ENCODE measurements at regions of chr18 and their contacts with region 1.

Region 1: GRCh38 chr18:9971313-9971920 is 57.6 kb downstream of the VAPA start:
- DNase-seq: peak; percentile 87
- H3K4me3 ChIP-seq: no peak overlapping the region
- H3K27ac ChIP-seq: no peak overlapping the region
- H3K4me1 ChIP-seq: peaks cover 9% of the 10 kb centered on the region
- H3K27me3 ChIP-seq: peaks cover 7 to 8% of the 10 kb centered on the region in 2 experiments
- CTCF ChIP-seq: peak; percentile 51 to 54
- POLR2A ChIP-seq: no peak

Region 2: DNA sequence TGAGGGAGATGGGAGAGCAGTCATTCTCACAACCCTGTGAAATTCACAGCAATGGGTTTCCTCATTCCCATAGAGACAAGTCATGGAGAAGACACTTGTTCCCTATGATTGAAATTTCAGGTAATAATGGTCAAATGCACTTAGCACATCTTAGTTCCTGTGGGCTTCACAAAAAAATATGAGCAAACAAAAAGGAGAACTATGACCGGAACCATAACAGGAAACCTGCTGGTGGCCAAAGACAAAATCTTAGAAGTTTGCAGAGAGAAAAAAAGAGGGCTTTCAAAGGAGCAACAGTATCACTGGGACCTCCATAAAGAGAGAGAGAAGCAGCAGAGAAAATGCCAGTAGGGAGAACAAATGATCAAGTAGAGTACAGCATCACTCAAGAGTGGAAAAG is 344.1 kb after region 1 on chr18:
- CTCF ChIA-PET with region 1: interaction called, 13 read pairs
- POLR2A ChIA-PET with region 1: no interaction called
- dilution Hi-C with region 1: no loop called
- intact Hi-C with region 1: loop called (anchors 1 kb)
- DNase-seq: no peak
- H3K4me3 ChIP-seq: no peak overlapping the region
- H3K27ac ChIP-seq: no peak overlapping the region
- H3K4me1 ChIP-seq: no peaks in the 10 kb centered on the region
- H3K27me3 ChIP-seq: peaks cover under 1 to 12% of the 10 kb centered on the region in 2 experiments
- CTCF ChIP-seq: no peak
- POLR2A ChIP-seq: no peak

Region 3: DNA sequence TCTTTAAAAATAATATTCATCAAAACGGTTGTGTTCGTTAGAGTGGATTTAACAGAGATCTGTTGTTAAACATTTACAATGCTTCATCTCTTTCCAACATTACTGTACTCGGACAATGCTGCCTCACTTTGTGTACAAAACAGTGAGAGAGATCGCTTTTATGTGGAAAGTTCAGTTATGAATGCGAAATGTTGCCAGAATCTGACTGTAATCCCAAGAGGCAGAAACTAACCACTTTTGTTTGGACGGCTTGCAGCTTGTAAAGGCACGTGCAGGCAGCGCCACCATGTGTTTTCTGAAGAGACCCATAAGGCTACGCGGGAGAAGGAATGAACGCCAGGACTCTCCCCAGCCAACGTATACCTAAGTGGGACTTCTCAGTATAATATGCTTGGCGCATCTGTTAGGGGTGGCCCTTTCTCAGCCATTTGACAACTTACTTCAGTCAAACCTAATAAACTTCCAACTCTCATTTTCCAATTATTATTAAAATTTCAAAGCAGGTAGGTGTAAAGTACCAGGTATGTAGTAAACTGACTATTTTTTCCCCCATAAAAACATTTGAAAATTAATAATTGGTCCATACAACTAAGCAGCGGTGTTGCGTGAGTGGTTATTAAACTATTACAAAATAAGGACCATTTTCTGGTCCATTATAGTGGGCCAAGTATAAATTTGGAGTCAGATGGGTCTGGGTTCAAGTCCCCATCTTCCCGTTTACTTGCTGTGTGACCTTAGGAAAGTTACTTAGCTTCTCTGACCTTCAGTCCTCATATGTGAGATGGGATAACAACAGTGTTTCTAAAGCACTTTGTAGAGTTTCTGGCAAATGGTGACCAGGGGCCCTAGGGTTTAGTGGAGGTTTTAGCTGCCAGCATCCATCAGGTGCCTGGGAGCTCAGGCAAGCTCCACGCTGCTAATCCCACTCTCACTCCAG is 548.9 kb after region 1 on chr18:
- CTCF ChIA-PET with region 1: interaction called, 186 read pairs
- POLR2A ChIA-PET with region 1: no interaction called
- dilution Hi-C with region 1: loop called (anchors 25 kb)
- intact Hi-C with region 1: loop called (anchors 1 kb)
- DNase-seq: peak; percentile 86
- H3K4me3 ChIP-seq: no peak overlapping the region
- H3K27ac ChIP-seq: no peak overlapping the region
- H3K4me1 ChIP-seq: no peaks in the 10 kb centered on the region
- H3K27me3 ChIP-seq: peaks cover 32 to 49% of the 10 kb centered on the region in 2 experiments
- CTCF ChIP-seq: peak; percentile 72 to 81
- POLR2A ChIP-seq: no peak

Region 4: GRCh38 chr18:10787293-10787901 is 816.0 kb after region 1 on chr18:
- CTCF ChIA-PET with region 1: no interaction called
- POLR2A ChIA-PET with region 1: no interaction called
- dilution Hi-C with region 1: no loop called
- intact Hi-C with region 1: loop called (anchors 2 kb)
- DNase-seq: peak; percentile 72
- H3K4me3 ChIP-seq: no peak overlapping the region
- H3K27ac ChIP-seq: no peak overlapping the region
- H3K4me1 ChIP-seq: no peaks in the 10 kb centered on the region
- H3K27me3 ChIP-seq: peaks cover 0 to 2% of the 10 kb centered on the region in 2 experiments
- CTCF ChIP-seq: peak; percentile 82 to 87
- POLR2A ChIP-seq: no peak

Region 5: DNA sequence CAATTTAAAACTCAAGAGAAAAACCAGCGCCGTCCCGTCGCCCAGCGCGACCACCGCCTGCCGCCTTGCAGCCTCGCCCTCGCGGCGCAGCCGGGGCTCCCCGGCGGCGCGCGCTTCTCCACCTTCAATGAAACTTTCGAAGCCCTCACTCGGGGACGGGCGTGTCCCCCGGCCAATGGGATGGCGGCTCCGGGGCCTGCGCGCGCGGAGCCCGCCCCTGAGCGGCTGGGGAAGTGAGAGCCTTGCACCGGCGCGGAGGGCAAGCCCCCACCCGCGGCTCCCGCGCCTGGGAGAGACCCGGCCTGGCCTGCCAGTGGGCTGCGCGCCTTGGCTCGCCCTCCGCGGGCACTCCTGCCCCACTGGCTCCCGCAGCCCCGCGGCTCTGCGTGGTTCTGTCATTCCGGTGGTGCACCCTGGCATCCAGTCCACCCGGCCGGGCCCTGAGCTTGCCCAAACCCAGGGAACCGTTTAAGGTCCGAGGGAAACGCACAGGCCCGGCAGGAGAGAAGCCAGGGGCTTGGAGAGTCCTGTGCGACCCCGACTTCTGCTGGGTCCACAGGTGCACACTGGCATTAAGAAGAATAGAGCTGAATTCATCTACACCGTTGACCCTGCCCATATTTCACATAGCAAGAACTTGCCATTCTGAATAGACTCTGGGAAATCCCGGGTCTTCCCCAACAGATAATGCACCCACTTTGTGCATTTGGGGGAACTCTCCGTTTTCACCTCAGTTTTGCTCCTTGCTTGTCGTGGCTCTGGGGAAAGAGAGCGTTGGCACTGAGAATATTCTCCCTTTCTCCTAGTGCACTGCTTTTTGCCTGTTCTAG is 1178.2 kb after region 1 on chr18 and contains the start of gene PIEZO2:
- CTCF ChIA-PET with region 1: interaction called, 15 read pairs
- POLR2A ChIA-PET with region 1: no interaction called
- dilution Hi-C with region 1: no loop called
- intact Hi-C with region 1: loop called (anchors 5 kb)
- DNase-seq: peak; percentile 29
- H3K4me3 ChIP-seq: peak within 1 kb of the TSS in 2 of 3 experiments; percentile 21 to 25
- H3K27ac ChIP-seq: no peak within 1 kb of the TSS
- H3K4me1 ChIP-seq: no peaks in the 10 kb centered on the region
- H3K27me3 ChIP-seq: peaks cover 44 to 47% of the 10 kb centered on the region in 2 experiments
- CTCF ChIP-seq: no peak
- POLR2A ChIP-seq: no peak
- total RNA-seq, gene PIEZO2: 5.0 and 11.2 TPM in 2 replicates